H1 (cell line): ENCODE measurements at regions of chr19 and their contacts with region 1.

Region 1: DNA sequence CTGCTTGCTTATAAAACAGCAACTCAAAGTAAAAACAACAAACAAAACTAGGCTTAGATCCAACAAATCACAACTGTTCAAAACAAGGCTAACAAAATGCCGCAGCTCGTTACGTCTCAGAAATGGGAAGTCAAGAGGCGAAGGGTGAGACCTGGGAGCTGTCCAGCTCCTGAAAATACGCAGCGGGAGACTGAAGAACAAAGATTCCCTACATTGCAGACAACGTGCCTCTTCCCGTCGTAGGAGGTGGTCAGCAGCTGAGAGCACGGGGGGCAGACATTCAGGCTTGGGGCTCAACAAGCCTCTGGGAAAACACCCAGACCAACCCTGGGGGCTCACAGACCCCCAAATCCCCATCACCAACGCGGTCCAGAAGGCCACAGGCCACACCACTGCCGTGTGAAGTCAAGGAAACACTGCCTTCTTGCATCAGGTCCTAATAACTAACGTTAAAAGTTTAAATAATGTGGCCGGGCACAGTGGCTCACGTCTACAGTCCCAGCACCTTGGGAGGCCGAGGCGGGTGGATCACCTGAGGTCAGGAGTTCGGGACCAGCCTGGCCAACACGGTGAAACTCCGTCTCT is 13.5 kb downstream of the PLPP2 start:
- DNase-seq: peak in 1 of 2 experiments; percentile 60
- H3K4me3 ChIP-seq: no peak overlapping the region
- H3K27ac ChIP-seq: no peak overlapping the region
- H3K4me1 ChIP-seq: peaks cover 0 to 9% (median 3%) of the 10 kb centered on the region in 4 experiments; a peak in 4 of 7 replicates
- H3K27me3 ChIP-seq: no peaks in the 10 kb centered on the region
- CTCF ChIP-seq: no peak
- EP300 ChIP-seq: no peak
- POLR2A ChIP-seq: no peak
- RAD21 ChIP-seq: no peak

Region 2: DNA sequence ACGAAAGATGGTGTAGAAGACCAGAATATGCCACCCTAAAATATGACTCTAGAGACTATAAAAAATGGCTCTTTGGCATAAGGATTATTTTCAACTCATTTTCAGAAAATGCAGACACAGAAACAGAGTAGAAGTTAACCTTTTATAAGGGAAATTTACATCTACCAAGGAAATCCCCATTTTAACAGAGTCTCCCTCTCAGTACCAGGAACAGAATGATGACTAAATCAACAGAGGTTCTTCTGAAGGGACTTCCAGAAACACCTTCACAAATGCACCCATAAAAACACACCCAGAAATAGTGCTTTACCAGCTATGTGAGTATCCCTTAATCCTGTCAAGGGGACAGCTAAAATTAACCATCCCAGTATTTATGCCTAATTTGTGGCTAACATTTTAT is 15.5 kb before region 1 on chr19:
- CTCF ChIA-PET with region 1: interaction called, 18 read pairs
- POLR2A ChIA-PET with region 1: interaction called, 8 read pairs
- DNase-seq: no peak
- H3K4me3 ChIP-seq: no peak overlapping the region
- H3K27ac ChIP-seq: no peak overlapping the region
- H3K4me1 ChIP-seq: peaks cover 0 to 1% (median 0%) of the 10 kb centered on the region in 4 experiments; a peak in 1 of 7 replicates
- H3K27me3 ChIP-seq: peaks cover 0 to 9% (median 6%) of the 10 kb centered on the region in 4 experiments; a peak in 5 of 7 replicates
- CTCF ChIP-seq: no peak
- EP300 ChIP-seq: no peak
- POLR2A ChIP-seq: no peak
- RAD21 ChIP-seq: no peak

Region 3: DNA sequence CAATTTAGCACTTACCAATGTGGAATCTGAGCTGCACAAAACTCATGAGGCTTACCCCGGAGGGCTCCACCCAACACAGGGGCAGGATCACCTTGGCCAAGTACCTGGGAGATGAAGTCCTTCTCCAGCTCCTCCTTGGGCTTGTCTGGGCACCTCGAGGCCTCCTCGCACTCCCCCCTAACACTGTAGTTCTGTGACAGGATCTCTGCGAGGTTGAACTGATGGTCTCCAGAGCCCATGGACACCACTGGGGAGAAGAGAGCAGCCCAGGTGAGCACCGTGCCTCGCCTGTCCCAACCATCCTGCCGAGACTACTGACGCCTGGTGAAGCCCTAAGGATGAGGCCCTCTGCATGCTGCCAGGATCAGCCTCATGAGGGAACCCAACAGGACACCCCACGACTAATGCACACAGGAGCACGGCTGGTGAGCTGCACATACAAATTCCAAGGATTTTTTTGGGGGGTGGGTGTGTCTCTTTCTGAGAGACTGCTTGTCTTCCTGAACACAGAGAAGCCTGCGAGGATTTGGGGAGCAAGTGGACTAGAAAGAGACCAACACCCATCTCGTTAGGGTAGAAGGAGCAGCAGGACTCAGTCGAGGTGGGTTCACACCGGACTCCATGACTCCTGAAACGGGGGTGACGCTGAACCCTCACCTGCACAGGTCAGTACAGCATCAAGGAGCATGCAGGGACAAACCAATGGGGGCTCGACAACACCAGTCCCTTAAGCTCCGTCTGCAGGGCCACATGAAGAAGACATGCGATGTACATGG is 56.8 kb after region 1 on chr19:
- CTCF ChIA-PET with region 1: no interaction called
- POLR2A ChIA-PET with region 1: no interaction called
- DNase-seq: no peak
- H3K4me3 ChIP-seq: no peak overlapping the region
- H3K27ac ChIP-seq: peak overlapping the region; percentile 36; the same call in 1 of the 2 replicates
- H3K4me1 ChIP-seq: no peaks in the 10 kb centered on the region
- H3K27me3 ChIP-seq: no peaks in the 10 kb centered on the region
- CTCF ChIP-seq: no peak
- EP300 ChIP-seq: no peak
- POLR2A ChIP-seq: no peak
- RAD21 ChIP-seq: no peak

Region 4: DNA sequence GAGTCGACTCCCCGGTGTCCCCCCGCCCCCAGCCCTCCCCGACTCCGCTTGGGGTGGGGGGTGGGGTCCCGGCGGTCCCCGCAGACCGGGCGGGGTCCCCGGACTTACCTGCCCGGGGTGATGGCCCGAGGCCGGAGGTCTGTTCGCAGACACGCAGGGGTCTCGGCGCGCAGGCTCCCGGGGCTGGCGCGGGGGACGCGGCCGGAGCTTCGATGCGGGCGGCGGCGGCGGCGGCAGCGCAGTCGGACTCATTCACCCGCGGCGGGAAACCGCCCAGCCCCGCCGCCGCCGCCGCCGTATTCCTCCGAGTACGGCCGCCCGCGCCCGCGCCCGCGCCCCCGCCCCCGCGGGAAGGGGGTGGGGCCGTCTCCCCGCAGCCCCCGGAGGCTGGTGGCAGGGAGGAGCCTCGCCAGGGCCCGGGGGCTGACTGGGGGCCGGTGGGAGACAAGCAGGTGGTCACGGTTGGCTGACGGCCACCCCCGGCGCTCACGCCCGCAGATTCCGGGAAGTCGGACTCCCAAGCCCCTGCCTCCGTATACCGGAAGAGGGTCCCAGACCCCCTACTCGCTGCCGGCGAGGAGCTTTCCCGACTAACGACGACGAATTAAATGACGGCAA is 131.3 kb after region 1 on chr19 and contains the start of gene C2CD4C:
- CTCF ChIA-PET with region 1: no interaction called
- POLR2A ChIA-PET with region 1: no interaction called
- DNase-seq: peak in 1 of 2 experiments; percentile 76
- H3K4me3 ChIP-seq: peak within 1 kb of the TSS; percentile 52 to 85 (median 53)
- H3K27ac ChIP-seq: no peak within 1 kb of the TSS
- H3K4me1 ChIP-seq: peaks cover 0 to 19% (median 9%) of the 10 kb centered on the region in 4 experiments; a peak in 5 of 7 replicates
- H3K27me3 ChIP-seq: peaks cover 0 to 14% (median 12%) of the 10 kb centered on the region in 4 experiments; a peak in 6 of 7 replicates
- CTCF ChIP-seq: no peak
- EP300 ChIP-seq: no peak
- POLR2A ChIP-seq: no peak
- RAD21 ChIP-seq: no peak
- total RNA-seq, gene C2CD4C: 6.3 and 6.6 TPM in 2 replicates